ENCODE measurements at regions of chr15 and their contacts with region 1.

Region 1: GRCh38 chr15:97909291-97909891 is 51.1 kb upstream of the ARRDC4 start:
- DNase-seq: peak; percentile 63 to 76 (median 68)
- ATAC-seq: peak; percentile 99
- H3K4me3 ChIP-seq: no peak overlapping the region
- H3K27ac ChIP-seq: no peak overlapping the region
- H3K4me1 ChIP-seq: no peaks in the 10 kb centered on the region
- H3K27me3 ChIP-seq: peaks cover 18 to 21% of the 10 kb centered on the region in 2 experiments
- CTCF ChIP-seq: peak; percentile 81 to 88 (median 86)
- EP300 ChIP-seq: no peak
- POLR2A ChIP-seq: no peak
- RAD21 ChIP-seq: peak; percentile 85 to 91

Region 2: DNA sequence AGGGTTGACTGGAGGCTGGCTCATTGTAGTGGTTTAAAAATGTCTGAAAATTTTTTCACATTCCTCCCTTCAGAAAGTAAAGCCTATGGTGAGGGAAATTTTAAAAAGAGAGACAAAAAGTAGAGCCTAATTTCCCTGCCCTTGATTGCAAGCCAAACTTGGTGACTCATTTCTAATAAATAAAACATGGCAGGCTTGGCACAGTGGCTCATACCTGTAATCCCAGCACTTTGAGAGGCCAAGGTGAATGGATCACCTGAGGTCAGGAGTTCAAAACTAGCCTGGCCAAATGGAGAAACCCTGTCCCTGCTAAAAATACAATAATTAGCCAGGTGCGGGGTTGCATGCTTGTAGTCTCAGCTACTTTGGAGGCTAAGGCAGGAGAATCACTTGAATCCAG is 32.2 kb after region 1 on chr15:
- CTCF ChIA-PET with region 1: no interaction called
- POLR2A ChIA-PET with region 1: no interaction called
- in situ Hi-C with region 1: no loop called
- intact Hi-C with region 1: no loop called
- DNase-seq: no peak
- ATAC-seq: no peak
- H3K4me3 ChIP-seq: no peak overlapping the region
- H3K27ac ChIP-seq: no peak overlapping the region
- H3K4me1 ChIP-seq: no peaks in the 10 kb centered on the region
- H3K27me3 ChIP-seq: peaks cover 8 to 15% of the 10 kb centered on the region in 2 experiments; a peak in 4 of 5 replicates
- CTCF ChIP-seq: no peak
- EP300 ChIP-seq: no peak
- POLR2A ChIP-seq: no peak
- RAD21 ChIP-seq: no peak

Region 3: DNA sequence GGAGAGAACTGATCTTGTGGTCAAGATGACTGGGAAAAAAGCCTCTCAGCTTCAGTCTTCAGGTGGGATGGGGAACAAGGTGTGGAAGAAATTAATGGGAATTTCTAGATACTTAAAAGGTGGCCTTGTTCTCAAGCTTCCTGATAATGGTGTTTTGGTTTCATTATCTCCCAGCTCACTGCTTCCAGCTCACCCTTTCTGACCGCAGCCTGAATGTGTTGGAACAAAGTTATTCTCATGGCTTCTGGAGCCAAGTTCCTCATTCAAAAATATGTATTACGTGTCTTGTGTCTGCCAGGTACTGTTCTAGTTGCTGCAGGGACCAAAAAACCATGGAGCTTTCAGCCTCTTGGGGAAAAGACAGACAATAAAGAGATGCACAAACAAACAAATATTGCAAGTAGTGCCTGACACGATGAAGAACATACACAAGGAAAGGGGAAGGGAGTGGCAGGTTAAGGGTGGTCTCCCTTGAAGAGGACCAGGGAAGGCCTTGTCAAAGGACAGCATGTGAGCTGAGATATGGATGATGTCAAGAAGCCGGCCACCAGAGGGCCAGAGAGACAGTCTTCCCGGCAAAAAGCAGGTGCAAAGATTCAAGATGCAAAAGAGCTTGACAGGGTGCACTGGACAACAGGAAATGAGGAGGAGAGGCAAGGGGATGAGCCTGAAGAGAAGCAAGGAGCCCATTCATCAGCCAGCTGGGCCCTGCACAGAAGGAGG is 86.7 kb after region 1 on chr15:
- CTCF ChIA-PET with region 1: no interaction called
- POLR2A ChIA-PET with region 1: no interaction called
- in situ Hi-C with region 1: no loop called
- intact Hi-C with region 1: loop called (anchors 10 kb)
- DNase-seq: peak in 2 of 4 experiments; percentile 18 to 40
- ATAC-seq: peak; percentile 71
- H3K4me3 ChIP-seq: no peak overlapping the region
- H3K27ac ChIP-seq: no peak overlapping the region
- H3K4me1 ChIP-seq: no peaks in the 10 kb centered on the region; a peak in 1 of 5 replicates
- H3K27me3 ChIP-seq: peaks cover 0 to 18% of the 10 kb centered on the region in 2 experiments; a peak in 1 of 5 replicates
- CTCF ChIP-seq: peak; percentile 23 to 45 (median 37); a peak in 2 of 6 replicates
- EP300 ChIP-seq: no peak
- POLR2A ChIP-seq: no peak
- RAD21 ChIP-seq: peak in 1 of 2 experiments; percentile 32; a peak in 1 of 4 replicates

Region 4: GRCh38 chr15:98085003-98085639 is 175.7 kb after region 1 on chr15:
- CTCF ChIA-PET with region 1: interaction called, 17 read pairs
- POLR2A ChIA-PET with region 1: interaction called, 3 read pairs
- in situ Hi-C with region 1: loop called (anchors 10 kb)
- intact Hi-C with region 1: loop called (anchors 1 kb)
- DNase-seq: peak in 2 of 4 experiments; percentile 40 to 72
- ATAC-seq: 0 out of 3 replicates have a peak, but pooled peaks have one; percentile 48
- H3K4me3 ChIP-seq: no peak overlapping the region
- H3K27ac ChIP-seq: no peak overlapping the region
- H3K4me1 ChIP-seq: no peaks in the 10 kb centered on the region; a peak in 1 of 5 replicates
- H3K27me3 ChIP-seq: no peaks in the 10 kb centered on the region
- CTCF ChIP-seq: peak; percentile 37 to 75 (median 54); a peak in 5 of 6 replicates
- EP300 ChIP-seq: no peak
- POLR2A ChIP-seq: no peak
- RAD21 ChIP-seq: peak; percentile 74 to 86

Region 5: GRCh38 chr15:98292442-98293240 is 383.2 kb after region 1 on chr15:
- CTCF ChIA-PET with region 1: no interaction called
- POLR2A ChIA-PET with region 1: no interaction called
- in situ Hi-C with region 1: loop called (anchors 25 kb)
- intact Hi-C with region 1: loop called (anchors 1 kb)
- DNase-seq: peak; percentile 61 to 83 (median 76)
- ATAC-seq: peak; percentile 99
- H3K4me3 ChIP-seq: no peak overlapping the region
- H3K27ac ChIP-seq: no peak overlapping the region
- H3K4me1 ChIP-seq: peaks cover 0 to 5% of the 10 kb centered on the region in 2 experiments; a peak in 1 of 5 replicates
- H3K27me3 ChIP-seq: peaks cover 11 to 25% of the 10 kb centered on the region in 2 experiments; a peak in 3 of 5 replicates
- CTCF ChIP-seq: peak; percentile 68 to 84 (median 81)
- EP300 ChIP-seq: no peak
- POLR2A ChIP-seq: no peak
- RAD21 ChIP-seq: peak in 1 of 2 experiments; percentile 29; a peak in 1 of 4 replicates

Region 6: DNA sequence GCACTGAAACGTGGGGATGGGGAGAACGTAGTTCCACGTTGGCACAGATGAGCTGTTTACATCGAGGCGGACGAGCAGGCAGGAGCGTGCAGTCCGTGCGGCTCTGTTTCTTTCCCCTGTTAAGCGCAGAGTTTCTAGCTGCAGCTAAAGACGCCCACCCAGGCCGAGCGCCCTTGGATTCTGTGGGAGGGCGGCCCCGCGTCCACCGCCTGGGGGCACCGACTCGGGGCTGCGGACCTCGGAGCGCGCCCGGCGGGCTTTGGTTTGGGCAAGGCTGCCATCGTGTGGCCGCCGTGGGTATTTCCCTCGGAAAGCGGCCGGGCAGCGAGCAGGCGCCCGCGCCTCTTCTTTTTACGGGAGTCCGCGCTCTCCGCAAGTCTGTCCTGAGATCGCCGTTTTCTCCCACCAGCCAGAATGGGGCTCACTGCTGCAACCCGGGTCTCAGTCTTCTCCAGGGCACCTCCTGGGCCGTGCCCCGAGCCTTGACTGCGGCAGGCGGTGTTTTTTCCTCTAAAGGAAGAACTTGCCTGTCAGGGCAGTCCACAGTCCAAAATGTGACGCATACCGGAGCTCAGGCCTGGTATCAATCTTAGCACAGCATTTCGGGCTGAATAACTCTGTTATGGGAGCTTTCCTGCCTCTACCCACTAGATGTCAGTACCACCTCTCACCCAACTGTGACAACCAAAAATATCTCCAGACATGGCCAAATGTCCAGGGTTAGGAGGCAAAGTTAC is 519.0 kb after region 1 on chr15:
- CTCF ChIA-PET with region 1: no interaction called
- POLR2A ChIA-PET with region 1: no interaction called
- in situ Hi-C with region 1: loop called (anchors 5 kb)
- intact Hi-C with region 1: no loop called
- DNase-seq: peak; percentile 61 to 81 (median 78)
- ATAC-seq: peak; percentile 97
- H3K4me3 ChIP-seq: no peak overlapping the region
- H3K27ac ChIP-seq: no peak overlapping the region
- H3K4me1 ChIP-seq: peaks cover 0 to 8% of the 10 kb centered on the region in 2 experiments; a peak in 2 of 5 replicates
- H3K27me3 ChIP-seq: peaks cover 2 to 13% of the 10 kb centered on the region in 2 experiments; a peak in 2 of 5 replicates
- CTCF ChIP-seq: peak; percentile 65 to 77 (median 69)
- EP300 ChIP-seq: no peak
- POLR2A ChIP-seq: no peak
- RAD21 ChIP-seq: peak; percentile 28 to 60; a peak in 2 of 4 replicates